Right ventricle myocardium superior (tissue), 1 donor: ENCODE measurements at regions of chr11 and their contacts with region 1.

Region 1: GRCh38 chr11:63813035-63813562 is at the start of gene SPINDOC:
- DNase-seq: peak; percentile 87
- ATAC-seq: peak; percentile 97
- total RNA-seq, gene SPINDOC: 11.3 TPM

Region 2: GRCh38 chr11:63768237-63769043 is 44.7 kb before region 1 on chr11 and contains the start of gene ZFTA:
- intact Hi-C with region 1: loop called (anchors 2 kb)
- DNase-seq: peak; percentile 80
- ATAC-seq: peak; percentile 50
- total RNA-seq, gene ZFTA: 12.5 TPM

Region 3: DNA sequence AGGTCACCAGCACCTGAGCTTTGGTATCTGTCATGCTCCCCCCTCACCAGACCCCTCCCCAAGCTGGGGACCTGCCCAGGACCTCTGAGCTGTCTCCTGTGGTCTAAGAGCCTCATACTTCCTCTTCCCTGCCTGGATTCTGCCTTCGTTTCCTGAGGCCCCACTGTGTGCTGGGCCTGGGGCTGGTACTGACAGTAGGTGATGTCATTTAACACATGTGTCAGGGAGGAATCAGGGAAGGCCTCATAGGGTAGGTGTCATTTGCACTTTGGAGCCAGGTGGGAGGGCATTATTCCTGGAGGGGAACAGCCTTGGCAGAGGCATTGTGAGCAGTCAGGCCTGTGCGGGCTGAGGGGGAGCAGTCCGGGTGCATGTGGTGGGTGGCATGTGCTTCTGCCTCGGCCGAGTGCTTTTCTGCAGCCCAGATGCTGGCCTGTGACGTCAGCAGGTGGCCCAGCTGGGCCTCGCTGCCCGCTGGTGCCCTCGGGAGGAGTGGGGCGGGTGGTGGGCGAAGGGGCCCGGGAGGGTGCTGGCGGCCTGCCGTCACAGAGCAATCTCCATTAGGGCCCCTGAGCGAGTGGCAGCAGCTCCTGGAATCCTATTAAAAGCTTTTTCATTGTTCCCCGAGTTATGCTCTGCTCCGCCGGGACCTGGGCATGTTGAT is 231.8 kb after region 1 on chr11:
- intact Hi-C with region 1: no loop called
- DNase-seq: no peak
- ATAC-seq: no peak